ENCODE measurements at regions of chr12 and their contacts with region 1.

Region 1: DNA sequence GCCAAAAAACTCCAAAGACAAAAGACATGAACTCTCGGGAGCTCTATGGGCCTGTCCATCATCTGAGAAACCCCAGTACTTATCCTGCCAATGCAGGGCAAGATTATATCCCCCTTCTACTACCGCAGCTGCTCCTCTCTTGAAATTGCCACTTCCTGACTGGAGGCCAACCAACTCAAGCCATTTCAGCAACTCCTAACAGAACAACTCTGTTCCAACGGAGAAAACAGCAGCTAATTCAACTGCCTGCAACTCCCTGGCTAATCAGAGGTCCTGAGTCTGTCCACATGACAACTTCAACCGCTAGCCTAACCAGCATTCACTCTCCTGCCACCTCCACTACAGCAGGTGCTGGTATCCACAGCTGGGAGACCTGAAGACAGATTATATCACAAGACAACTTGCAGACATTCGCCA is 24.1 kb downstream of the CEP83 start:
- DNase-seq: no peak
- ATAC-seq: no peak

Region 2: DNA sequence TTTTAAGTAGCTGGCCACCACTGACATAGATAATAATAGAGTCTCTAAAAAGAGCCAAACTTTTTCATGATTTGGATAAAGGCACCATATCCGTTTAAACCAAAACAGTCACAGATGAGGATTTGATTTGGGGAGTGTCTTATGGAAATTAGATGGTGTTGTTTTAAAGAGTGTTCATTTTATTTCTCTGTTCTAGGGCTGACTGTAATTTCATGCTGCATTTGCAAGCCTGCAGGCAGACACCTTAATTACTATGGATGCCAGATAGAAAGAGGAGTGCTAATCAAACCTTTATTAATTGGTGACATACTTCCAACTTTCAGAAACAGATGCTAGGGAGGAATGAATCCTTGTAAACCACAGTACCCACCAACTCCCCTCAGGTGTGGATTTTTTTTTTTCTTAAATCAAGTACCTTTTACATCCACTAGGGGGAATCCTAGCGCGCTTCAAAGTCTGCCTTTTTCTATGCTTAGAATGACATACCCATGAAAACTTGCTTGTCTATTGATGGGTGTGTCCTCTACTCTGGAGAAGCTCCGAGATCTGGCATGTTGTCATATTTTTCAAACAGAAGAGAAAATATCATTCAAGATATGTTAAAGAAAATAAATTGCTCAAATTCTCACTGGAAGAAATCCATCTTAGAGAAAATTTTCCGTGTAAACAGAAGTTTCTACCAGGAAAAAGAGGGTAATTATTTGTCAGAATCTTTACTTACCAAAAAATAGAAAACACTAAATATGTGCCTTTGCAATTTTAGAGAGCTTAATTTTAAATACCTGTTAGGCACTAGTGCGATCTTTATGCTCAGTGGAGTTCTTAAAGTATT is 301.3 kb before region 1 on chr12:
- intact Hi-C with region 1: loop called in 1 of 2 experiments (anchors 10 kb)
- DNase-seq: no peak
- ATAC-seq: peak; percentile 96

Region 3: DNA sequence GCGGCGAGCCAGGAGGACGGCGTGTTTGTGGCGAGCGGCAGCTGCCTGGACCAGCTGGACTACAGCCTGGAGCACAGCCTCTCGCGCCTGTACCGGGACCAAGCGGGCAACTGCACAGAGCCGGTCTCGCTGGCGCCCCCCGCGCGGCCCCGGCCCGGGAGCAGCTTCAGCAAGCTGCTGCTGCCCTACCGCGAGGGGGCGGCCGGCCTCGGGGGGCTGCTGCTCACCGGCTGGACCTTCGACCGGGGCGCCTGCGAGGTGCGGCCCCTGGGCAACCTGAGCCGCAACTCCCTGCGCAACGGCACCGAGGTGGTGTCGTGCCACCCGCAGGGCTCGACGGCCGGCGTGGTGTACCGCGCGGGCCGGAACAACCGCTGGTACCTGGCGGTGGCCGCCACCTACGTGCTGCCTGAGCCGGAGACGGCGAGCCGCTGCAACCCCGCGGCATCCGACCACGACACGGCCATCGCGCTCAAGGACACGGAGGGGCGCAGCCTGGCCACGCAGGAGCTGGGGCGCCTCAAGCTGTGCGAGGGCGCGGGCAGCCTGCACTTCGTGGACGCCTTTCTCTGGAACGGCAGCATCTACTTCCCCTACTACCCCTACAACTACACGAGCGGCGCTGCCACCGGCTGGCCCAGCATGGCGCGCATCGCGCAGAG is 286.3 kb before region 1 on chr12:
- intact Hi-C with region 1: loop called in 1 of 2 experiments (anchors 10 kb)
- DNase-seq: peak; percentile 56 to 71
- ATAC-seq: peak; percentile 31

Region 4: DNA sequence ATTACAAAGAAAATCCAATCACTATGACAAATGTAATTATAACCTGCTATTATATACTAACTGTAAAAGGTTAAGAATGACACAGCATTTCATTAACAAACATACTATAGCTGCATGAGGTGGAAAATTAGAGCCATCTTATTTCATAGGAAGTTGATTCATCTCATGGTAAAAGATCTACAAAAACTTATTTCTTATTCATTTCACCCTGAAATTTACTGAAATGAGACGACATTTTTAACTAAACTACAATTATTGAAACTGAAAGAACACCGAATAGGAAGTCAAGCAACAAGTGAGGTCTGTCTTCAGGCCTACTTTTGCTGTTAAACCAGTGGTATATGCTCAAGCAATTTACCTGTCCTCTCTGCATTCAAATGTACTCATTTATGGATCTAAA is 63.1 kb before region 1 on chr12:
- intact Hi-C with region 1: no loop called
- DNase-seq: no peak
- ATAC-seq: no peak

Region 5: DNA sequence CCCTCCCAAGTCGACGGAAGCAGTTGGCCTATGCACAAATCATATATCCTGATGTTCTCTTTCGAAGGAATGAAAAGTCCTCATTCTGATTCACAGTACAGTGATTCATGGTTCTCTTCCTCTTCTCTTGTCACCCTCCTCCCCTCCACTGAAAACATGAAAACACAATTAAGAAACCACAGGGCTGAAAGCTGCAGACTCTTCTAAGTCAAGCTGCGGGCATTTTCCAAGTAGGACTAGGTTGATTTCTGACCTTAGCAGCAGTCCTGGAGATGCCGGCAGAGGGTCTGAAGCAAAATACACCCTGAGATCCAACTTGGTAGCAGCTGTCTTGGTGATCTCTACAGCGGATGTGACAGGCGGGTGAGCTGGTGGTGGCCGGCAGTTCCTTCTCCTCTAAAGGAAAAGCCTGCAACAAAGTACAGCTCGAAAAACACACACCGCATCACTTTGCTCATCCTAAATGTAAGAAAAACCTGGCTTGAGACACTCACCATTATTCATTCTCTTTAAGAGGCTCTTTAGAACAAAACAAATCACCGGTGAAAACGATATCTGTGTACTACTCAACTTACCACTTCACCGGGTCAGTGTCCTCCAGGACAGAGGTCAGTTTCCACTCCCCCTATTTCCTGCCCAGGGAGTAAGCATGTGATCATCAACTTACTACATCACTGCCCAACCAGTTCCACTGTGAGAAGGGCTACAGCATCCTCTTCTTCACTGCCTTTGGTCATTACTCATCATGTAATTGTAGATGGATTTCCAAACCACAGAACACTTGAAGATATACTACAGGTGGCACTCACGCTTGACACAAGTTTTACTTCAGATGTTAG is 208.8 kb after region 1 on chr12:
- intact Hi-C with region 1: no loop called
- DNase-seq: no peak
- ATAC-seq: no peak